GM12878 (cell line): ENCODE measurements at regions of chr19 and their contacts with region 1.

Region 1: GRCh38 chr19:38975214-38975860 is at the start of gene FBXO17:
- DNase-seq: no peak
- ATAC-seq: peak; percentile 50
- H3K4me3 ChIP-seq: no peak within 1 kb of the TSS
- H3K27ac ChIP-seq: no peak within 1 kb of the TSS
- H3K4me1 ChIP-seq: peaks cover 21% of the 10 kb centered on the region
- H3K27me3 ChIP-seq: peaks cover 0 to 3% of the 10 kb centered on the region in 2 experiments; a peak in 2 of 4 replicates
- CTCF ChIP-seq: no peak
- EP300 ChIP-seq: no peak
- POLR2A ChIP-seq: no peak
- RAD21 ChIP-seq: no peak
- polyA plus RNA-seq, gene FBXO17: 2.2 to 2.4 TPM

Region 2: GRCh38 chr19:37077934-37078725 is 1897.2 kb before region 1 on chr19 and contains the start of gene ZNF420:
- CTCF ChIA-PET with region 1: no interaction called
- POLR2A ChIA-PET with region 1: no interaction called
- RAD21 ChIA-PET with region 1: no interaction called
- SMC1A ChIA-PET with region 1: no interaction called
- in situ Hi-C with region 1: no loop called
- intact Hi-C with region 1: no loop called
- DNase-seq: peak; percentile 82
- ATAC-seq: peak; percentile 99
- H3K4me3 ChIP-seq: peak within 1 kb of the TSS; percentile 88
- H3K27ac ChIP-seq: peak within 1 kb of the TSS; percentile 83
- H3K4me1 ChIP-seq: peaks cover 6% of the 10 kb centered on the region
- H3K27me3 ChIP-seq: no peaks in the 10 kb centered on the region
- CTCF ChIP-seq: no peak
- EP300 ChIP-seq: no peak
- POLR2A ChIP-seq: peak; percentile 89
- RAD21 ChIP-seq: no peak
- polyA plus RNA-seq, gene ZNF420: 6.4 to 7.8 TPM

Region 3: GRCh38 chr19:38944981-38945506 is 30.3 kb before region 1 on chr19:
- CTCF ChIA-PET with region 1: no interaction called
- POLR2A ChIA-PET with region 1: no interaction called
- RAD21 ChIA-PET with region 1: no interaction called
- SMC1A ChIA-PET with region 1: no interaction called
- in situ Hi-C with region 1: no loop called
- intact Hi-C with region 1: no loop called
- DNase-seq: no peak
- ATAC-seq: no peak
- H3K4me3 ChIP-seq: no peak overlapping the region
- H3K27ac ChIP-seq: no peak overlapping the region
- H3K4me1 ChIP-seq: no peaks in the 10 kb centered on the region
- H3K27me3 ChIP-seq: no peaks in the 10 kb centered on the region; a peak in 1 of 4 replicates
- CTCF ChIP-seq: no peak
- EP300 ChIP-seq: no peak
- POLR2A ChIP-seq: no peak
- RAD21 ChIP-seq: no peak

Region 4: GRCh38 chr19:38994667-38995066 is 19.3 kb after region 1 on chr19:
- CTCF ChIA-PET with region 1: interaction called, 20 read pairs
- POLR2A ChIA-PET with region 1: interaction called, 15 read pairs
- RAD21 ChIA-PET with region 1: interaction called, 6 read pairs
- SMC1A ChIA-PET with region 1: interaction called, 5 read pairs
- in situ Hi-C with region 1: no loop called
- intact Hi-C with region 1: no loop called
- DNase-seq: no peak
- ATAC-seq: no peak
- H3K4me3 ChIP-seq: no peak overlapping the region
- H3K27ac ChIP-seq: no peak overlapping the region
- H3K4me1 ChIP-seq: peaks cover 3% of the 10 kb centered on the region; the same call in 1 of the 2 replicates
- H3K27me3 ChIP-seq: no peaks in the 10 kb centered on the region
- CTCF ChIP-seq: no peak
- EP300 ChIP-seq: no peak
- POLR2A ChIP-seq: no peak
- RAD21 ChIP-seq: no peak

Region 5: DNA sequence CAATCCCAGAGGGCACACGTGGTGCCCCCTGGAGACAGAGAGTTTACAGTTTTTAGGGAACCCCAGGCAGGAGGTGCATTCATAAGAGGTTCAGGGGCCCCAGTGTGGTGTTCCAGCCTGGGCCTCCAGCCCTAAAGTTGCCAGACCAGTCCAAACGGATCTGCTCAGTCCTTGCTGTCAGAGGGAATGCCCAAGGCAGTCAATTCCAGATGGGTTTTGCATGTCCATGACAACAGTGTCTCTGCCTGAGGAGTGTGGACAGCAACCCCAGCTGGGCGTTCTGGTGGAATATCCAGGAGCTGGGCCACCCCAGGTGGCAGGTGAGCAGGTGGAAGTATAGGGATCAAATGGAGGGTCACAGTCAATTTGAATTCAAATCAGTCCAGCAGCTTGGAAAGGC is 31.8 kb after region 1 on chr19:
- CTCF ChIA-PET with region 1: interaction called, 22 read pairs
- POLR2A ChIA-PET with region 1: interaction called, 5 read pairs
- RAD21 ChIA-PET with region 1: interaction called, 4 read pairs
- SMC1A ChIA-PET with region 1: interaction called, 20 read pairs
- in situ Hi-C with region 1: no loop called
- intact Hi-C with region 1: loop called (anchors 1 kb)
- DNase-seq: no peak
- ATAC-seq: peak; percentile 21
- H3K4me3 ChIP-seq: no peak overlapping the region
- H3K27ac ChIP-seq: 0 out of 2 replicates have a peak overlapping the region, but pooled peaks have one; percentile 35
- H3K4me1 ChIP-seq: peaks cover 27% of the 10 kb centered on the region
- H3K27me3 ChIP-seq: no peaks in the 10 kb centered on the region
- CTCF ChIP-seq: no peak
- EP300 ChIP-seq: no peak
- POLR2A ChIP-seq: no peak
- RAD21 ChIP-seq: no peak

Region 6: DNA sequence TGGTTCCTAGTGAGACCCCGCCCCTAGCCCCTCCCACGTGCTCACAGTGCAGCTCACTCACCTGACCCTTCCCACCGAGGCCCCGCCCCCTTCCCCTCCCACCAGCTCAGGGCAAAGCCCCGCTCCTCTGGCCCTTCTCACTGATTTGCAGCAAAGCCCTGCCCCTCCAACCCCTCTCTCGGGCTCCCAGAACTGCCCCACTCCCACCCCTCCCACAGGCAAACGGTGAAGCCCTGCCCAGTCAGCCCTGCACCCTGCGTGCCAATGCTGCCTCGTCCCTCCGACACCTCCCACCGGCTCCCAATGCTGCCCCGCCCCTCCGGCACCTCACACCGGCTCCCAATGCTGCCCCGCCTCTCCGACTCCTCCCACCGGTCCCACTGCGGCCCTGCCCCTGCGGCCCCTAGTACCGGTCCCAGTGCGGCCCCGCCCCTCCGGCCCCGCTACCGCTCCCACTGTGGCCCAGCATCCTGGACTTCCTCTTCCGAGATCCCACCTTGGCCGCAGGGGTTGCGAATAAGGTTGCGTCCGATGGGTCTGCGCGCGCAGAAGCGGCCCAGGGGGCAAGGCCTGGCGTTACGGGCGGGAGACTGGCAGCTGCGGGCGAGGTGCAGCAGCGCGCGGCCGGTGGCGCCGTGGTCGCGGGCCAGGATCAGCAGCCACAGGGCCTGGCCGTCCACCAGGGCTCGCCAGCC is 56.2 kb after region 1 on chr19:
- CTCF ChIA-PET with region 1: interaction called, 26 read pairs
- POLR2A ChIA-PET with region 1: interaction called, 12 read pairs
- RAD21 ChIA-PET with region 1: interaction called, 27 read pairs
- SMC1A ChIA-PET with region 1: interaction called, 19 read pairs
- in situ Hi-C with region 1: no loop called
- intact Hi-C with region 1: no loop called
- DNase-seq: peak; percentile 60
- ATAC-seq: peak; percentile 94
- H3K4me3 ChIP-seq: peak overlapping the region; percentile 72
- H3K27ac ChIP-seq: no peak overlapping the region
- H3K4me1 ChIP-seq: peaks cover 6% of the 10 kb centered on the region; the same call in 1 of the 2 replicates
- H3K27me3 ChIP-seq: no peaks in the 10 kb centered on the region
- CTCF ChIP-seq: no peak
- EP300 ChIP-seq: no peak
- POLR2A ChIP-seq: no peak; the same call in 1 of the 2 replicates
- RAD21 ChIP-seq: no peak